CD8-positive, alpha-beta T cell (primary cell): ENCODE measurements at regions of chr20 and their contacts with region 1.

Region 1: DNA sequence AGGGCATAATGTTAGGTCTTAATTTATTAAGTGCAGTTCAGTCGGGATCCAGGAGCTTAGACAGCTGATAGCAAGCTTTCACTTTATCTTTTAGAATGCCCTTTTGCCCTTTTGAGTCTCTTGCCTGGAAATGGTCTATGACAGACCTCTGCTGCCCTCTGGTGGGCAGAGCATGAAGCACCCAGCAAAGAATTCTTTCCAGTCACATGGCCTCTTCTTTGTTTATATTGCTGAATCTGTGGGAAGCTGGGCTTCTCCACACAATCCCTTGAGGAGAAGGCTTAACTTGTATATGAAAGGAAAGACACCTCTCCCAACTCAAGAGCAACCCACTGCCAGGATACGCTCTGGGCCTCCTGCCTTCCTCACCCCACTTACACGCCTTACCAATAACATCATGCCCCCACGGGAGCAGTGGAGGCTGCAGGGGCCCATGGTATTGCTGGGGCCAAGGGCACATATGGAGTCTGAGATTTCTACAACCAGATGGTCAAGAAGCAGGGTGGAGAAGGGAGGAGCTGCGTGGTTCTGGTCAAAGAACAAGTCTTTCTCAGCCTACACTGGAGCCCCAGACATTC is 20.4 kb downstream of the WFDC3 start:
- DNase-seq: peak; percentile 58 to 87 (median 80)
- ATAC-seq: peak; percentile 90
- H3K4me3 ChIP-seq: no peak overlapping the region
- H3K4me3 Mint-ChIP-seq: no peak overlapping the region
- H3K27ac ChIP-seq: no peak overlapping the region
- H3K27ac Mint-ChIP-seq: no peak overlapping the region
- H3K4me1 ChIP-seq: peaks cover 4% of the 10 kb centered on the region
- H3K4me1 Mint-ChIP-seq: peaks cover 5% of the 10 kb centered on the region
- H3K27me3 ChIP-seq: no peaks in the 10 kb centered on the region
- H3K27me3 Mint-ChIP-seq: peaks cover 19% of the 10 kb centered on the region
- CTCF ChIP-seq: peak; percentile 91

Region 2: DNA sequence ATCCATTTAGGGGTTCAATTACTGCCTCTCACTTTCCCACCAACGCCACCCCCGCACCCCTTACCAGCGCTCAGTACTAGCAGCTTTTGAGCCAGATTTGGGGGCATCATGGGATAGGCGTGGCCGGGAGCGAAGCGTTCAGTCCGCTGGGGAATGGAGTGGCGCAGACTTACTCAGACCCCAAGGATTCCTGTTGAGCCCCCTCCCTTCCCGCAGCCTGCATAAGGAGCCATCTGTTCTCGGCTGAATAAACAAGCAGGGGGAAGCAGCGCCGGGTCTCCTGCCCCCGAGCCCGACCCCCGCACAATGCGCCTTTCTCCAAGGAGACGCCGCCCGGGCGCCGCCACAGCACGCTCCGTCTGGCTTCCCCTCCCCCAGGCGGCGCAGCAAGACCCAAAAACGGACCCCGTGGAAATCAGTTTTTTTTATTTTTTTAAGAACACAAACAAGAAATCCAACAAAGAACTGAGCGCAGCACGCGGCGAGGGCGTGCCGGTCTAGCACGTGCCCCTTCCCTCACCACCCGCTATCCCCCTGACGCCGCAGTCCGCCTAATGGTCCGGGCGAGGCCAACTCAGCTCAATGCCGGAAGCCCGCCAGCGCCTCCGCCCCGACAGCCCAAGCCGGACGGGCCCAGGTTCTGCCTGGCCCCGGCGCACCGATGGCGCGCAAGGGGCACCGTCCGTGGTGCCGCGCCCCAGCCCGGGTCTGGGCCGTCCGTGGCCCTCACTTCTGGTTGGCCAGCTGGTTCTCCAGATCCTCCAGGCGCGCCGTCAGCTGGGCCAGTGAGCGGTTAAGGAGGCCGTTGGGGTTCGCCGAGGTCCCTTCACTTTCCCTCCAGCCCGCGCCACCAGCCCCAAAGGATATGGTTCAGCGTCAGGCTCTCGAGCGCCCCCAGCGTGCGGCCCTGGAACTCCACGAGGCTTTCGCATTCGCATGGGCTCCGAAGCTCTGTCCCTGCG is 477.9 kb before region 1 on chr20:
- CTCF ChIA-PET with region 1: interaction called, 22 read pairs
- POLR2A ChIA-PET with region 1: no interaction called
- intact Hi-C with region 1: no loop called
- DNase-seq: peak; percentile 66 to 84 (median 80)
- ATAC-seq: peak; percentile 91
- H3K4me3 ChIP-seq: peak overlapping the region; percentile 39 to 76
- H3K4me3 Mint-ChIP-seq: peak overlapping the region; percentile 80
- H3K27ac ChIP-seq: no peak overlapping the region
- H3K27ac Mint-ChIP-seq: no peak overlapping the region
- H3K4me1 ChIP-seq: no peaks in the 10 kb centered on the region
- H3K4me1 Mint-ChIP-seq: peaks cover 13% of the 10 kb centered on the region
- H3K27me3 ChIP-seq: peaks cover 7 to 8% of the 10 kb centered on the region in 2 experiments
- H3K27me3 Mint-ChIP-seq: peaks cover 45% of the 10 kb centered on the region
- CTCF ChIP-seq: peak; percentile 90

Region 3: GRCh38 chr20:45337367-45338120 is 433.7 kb before region 1 on chr20:
- CTCF ChIA-PET with region 1: interaction called, 14 read pairs
- POLR2A ChIA-PET with region 1: no interaction called
- intact Hi-C with region 1: no loop called
- DNase-seq: no peak
- ATAC-seq: no peak
- H3K4me3 ChIP-seq: no peak overlapping the region
- H3K4me3 Mint-ChIP-seq: no peak overlapping the region
- H3K27ac ChIP-seq: no peak overlapping the region
- H3K27ac Mint-ChIP-seq: no peak overlapping the region
- H3K4me1 ChIP-seq: no peaks in the 10 kb centered on the region
- H3K4me1 Mint-ChIP-seq: no peaks in the 10 kb centered on the region
- H3K27me3 ChIP-seq: no peaks in the 10 kb centered on the region
- H3K27me3 Mint-ChIP-seq: no peaks in the 10 kb centered on the region
- CTCF ChIP-seq: no peak

Region 4: DNA sequence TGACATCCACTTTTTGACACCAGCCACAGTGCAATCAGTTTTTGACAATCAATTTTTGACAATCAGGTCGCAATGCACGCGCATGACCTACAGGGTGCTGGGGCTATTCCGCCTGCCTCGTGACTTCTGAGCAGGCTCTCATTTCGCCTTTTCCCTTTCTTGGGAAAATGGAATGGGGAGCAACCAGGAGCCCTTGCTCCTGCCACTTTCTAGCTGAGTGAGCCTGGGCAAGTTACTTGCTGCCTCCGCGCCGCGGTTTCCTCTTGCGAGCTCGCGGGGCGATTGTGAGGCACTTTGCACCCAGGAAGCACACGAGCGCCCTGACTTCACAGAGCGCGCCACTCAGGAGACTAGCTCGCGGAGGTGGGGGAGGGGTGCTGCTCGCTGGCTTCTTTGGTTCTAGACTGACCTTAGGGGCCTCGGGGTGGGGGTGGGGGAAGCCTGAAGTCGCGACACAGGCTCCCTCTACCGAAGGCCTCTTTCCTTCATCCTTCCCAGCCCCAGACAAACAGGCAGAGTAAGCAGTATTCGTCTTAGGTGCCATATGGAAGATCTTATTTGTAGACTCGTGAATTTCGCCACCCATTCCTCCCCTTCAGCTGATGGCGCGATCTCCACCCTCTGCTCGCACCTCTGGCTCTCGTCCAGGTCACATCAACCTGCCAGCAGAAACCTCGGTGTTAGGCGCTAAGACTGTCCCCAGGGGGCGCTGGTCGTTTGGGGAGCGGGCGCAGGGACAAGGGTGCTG is 397.7 kb before region 1 on chr20:
- CTCF ChIA-PET with region 1: interaction called, 19 read pairs
- POLR2A ChIA-PET with region 1: no interaction called
- intact Hi-C with region 1: no loop called
- DNase-seq: peak; percentile 81 to 94 (median 91)
- ATAC-seq: peak; percentile 89
- H3K4me3 ChIP-seq: peak overlapping the region; percentile 57 to 64
- H3K4me3 Mint-ChIP-seq: peak overlapping the region; percentile 89
- H3K27ac ChIP-seq: peak overlapping the region; percentile 51 to 85
- H3K27ac Mint-ChIP-seq: peak overlapping the region; percentile 91
- H3K4me1 ChIP-seq: peaks cover 14% of the 10 kb centered on the region
- H3K4me1 Mint-ChIP-seq: peaks cover 37% of the 10 kb centered on the region
- H3K27me3 ChIP-seq: no peaks in the 10 kb centered on the region
- H3K27me3 Mint-ChIP-seq: no peaks in the 10 kb centered on the region
- CTCF ChIP-seq: peak; percentile 90

Region 5: DNA sequence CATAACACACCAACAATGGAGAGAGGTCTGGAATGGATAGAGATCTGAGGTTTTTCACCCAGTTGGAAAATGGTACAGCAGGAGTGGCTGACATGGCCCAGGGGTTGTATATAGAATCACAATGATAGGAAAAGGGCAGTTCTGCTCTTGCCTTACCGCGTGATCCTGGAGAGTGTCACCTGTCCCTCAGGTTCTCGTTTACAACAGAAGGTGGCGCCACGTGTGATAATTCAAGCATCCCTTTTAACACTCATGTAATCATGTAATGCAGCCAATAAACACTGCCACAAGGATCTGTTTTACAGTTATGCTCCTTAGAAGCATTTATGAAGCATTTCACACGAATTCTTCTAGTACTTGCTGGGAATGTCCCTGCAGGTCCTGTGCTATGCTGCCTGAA is 314.6 kb before region 1 on chr20:
- CTCF ChIA-PET with region 1: interaction called, 22 read pairs
- POLR2A ChIA-PET with region 1: no interaction called
- intact Hi-C with region 1: loop called (anchors 2 kb)
- DNase-seq: peak in 2 of 9 experiments; percentile 29 to 41
- ATAC-seq: peak; percentile 48
- H3K4me3 ChIP-seq: no peak overlapping the region
- H3K4me3 Mint-ChIP-seq: no peak overlapping the region
- H3K27ac ChIP-seq: no peak overlapping the region
- H3K27ac Mint-ChIP-seq: no peak overlapping the region
- H3K4me1 ChIP-seq: no peaks in the 10 kb centered on the region
- H3K4me1 Mint-ChIP-seq: no peaks in the 10 kb centered on the region
- H3K27me3 ChIP-seq: no peaks in the 10 kb centered on the region
- H3K27me3 Mint-ChIP-seq: no peaks in the 10 kb centered on the region
- CTCF ChIP-seq: peak; percentile 27

Region 6: DNA sequence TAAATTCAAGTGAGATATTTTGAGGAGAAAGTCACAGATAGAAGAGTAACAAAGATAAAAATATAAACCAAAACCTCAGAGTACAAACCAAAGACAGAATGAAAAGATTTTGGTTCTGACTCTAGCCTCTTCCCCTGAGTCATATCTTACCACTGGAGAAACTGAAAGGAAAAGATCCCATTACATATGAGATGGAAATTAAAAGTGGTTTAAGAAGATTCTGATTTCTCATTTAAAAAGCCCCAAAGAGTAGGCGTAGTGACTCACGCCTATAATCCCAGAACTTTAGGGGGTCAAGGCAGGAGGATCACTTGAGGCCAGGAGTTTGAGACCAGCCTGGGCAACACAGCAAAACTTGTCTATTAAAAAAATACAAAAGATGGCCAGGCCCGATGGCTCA is 18.5 kb before region 1 on chr20:
- CTCF ChIA-PET with region 1: interaction called, 13 read pairs
- POLR2A ChIA-PET with region 1: no interaction called
- intact Hi-C with region 1: no loop called
- DNase-seq: no peak
- ATAC-seq: no peak
- H3K4me3 ChIP-seq: no peak overlapping the region
- H3K4me3 Mint-ChIP-seq: no peak overlapping the region
- H3K27ac ChIP-seq: no peak overlapping the region
- H3K27ac Mint-ChIP-seq: no peak overlapping the region
- H3K4me1 ChIP-seq: no peaks in the 10 kb centered on the region
- H3K4me1 Mint-ChIP-seq: no peaks in the 10 kb centered on the region
- H3K27me3 ChIP-seq: no peaks in the 10 kb centered on the region
- H3K27me3 Mint-ChIP-seq: peaks cover 23% of the 10 kb centered on the region
- CTCF ChIP-seq: no peak